ENCODE measurements at regions of chr6 and their contacts with region 1.

Region 1: GRCh38 chr6:144013486-144013909 is 5.4 kb upstream of the PLAGL1 start:
- DNase-seq: peak; percentile 62 to 63
- H3K4me3 ChIP-seq: no peak overlapping the region
- H3K27ac ChIP-seq: no peak overlapping the region
- H3K4me1 ChIP-seq: no peaks in the 10 kb centered on the region
- H3K27me3 ChIP-seq: peaks cover 4% of the 10 kb centered on the region; the same call in 1 of the 2 replicates
- CTCF ChIP-seq: peak; percentile 88

Region 2: DNA sequence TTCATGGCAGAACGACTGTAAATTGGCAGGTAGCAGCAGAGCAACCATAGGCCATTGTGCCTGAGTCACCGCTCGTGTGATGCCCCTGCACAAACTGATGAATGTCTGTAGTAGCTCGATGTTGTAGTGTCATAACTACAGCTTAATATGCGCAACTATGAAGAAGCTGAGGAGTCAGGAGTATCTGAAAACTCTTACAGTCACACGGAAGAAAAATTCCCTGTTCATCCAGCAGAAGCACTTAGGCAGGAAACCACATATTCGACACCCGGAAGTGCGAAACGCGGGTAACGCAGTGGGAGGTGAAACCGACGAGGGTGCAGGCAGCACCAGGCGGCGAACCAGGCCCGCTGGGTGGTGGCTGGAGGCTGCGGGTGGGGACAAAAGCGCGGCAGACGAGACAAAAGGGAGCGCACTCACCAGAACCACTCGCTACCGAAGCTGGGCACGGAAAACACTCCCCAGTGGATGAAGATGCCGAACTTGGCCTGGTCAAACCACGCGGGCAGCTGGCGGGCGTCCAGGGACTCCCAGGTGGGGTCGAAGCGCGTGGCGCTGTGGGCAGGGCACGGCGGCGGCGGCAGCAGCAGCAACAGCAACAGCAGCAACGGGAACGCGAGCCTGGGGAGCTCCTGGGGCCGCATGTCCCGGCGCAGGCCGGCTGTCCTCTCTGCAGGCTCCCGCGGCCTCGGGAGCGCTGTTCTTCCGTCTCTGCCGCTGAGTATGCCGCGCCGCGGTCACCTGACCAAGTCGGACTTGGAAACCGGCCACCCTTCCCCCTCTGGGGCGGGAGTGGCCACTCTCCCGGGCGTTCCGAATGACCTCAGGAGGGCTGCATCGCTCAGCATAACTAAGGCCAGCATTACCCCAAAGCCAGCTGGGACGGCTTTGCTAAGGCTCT is 502.3 kb before region 1 on chr6 and contains the start of gene FUCA2:
- CTCF ChIA-PET with region 1: no interaction called
- POLR2A ChIA-PET with region 1: no interaction called
- intact Hi-C with region 1: loop called (anchors 2 kb)
- DNase-seq: peak; percentile 65 to 84
- H3K4me3 ChIP-seq: peak within 1 kb of the TSS; percentile 81
- H3K27ac ChIP-seq: peak within 1 kb of the TSS; percentile 71
- H3K4me1 ChIP-seq: peaks cover 21% of the 10 kb centered on the region
- H3K27me3 ChIP-seq: no peaks in the 10 kb centered on the region
- CTCF ChIP-seq: no peak
- total RNA-seq, gene FUCA2: 65.0 and 74.8 TPM in 2 replicates

Region 3: GRCh38 chr6:143575440-143575839 is 438.1 kb before region 1 on chr6:
- CTCF ChIA-PET with region 1: interaction called, 10 read pairs
- POLR2A ChIA-PET with region 1: no interaction called
- intact Hi-C with region 1: loop called (anchors 1 kb)
- DNase-seq: peak; percentile 48 to 56
- H3K4me3 ChIP-seq: no peak overlapping the region
- H3K27ac ChIP-seq: no peak overlapping the region
- H3K4me1 ChIP-seq: no peaks in the 10 kb centered on the region
- H3K27me3 ChIP-seq: no peaks in the 10 kb centered on the region
- CTCF ChIP-seq: peak; percentile 93

Region 4: GRCh38 chr6:143745166-143746133 is 268.0 kb before region 1 on chr6:
- CTCF ChIA-PET with region 1: no interaction called
- POLR2A ChIA-PET with region 1: no interaction called
- intact Hi-C with region 1: loop called (anchors 10 kb)
- DNase-seq: peak; percentile 78 to 80
- H3K4me3 ChIP-seq: peak overlapping the region; percentile 17; the same call in 1 of the 2 replicates
- H3K27ac ChIP-seq: peak overlapping the region; percentile 54
- H3K4me1 ChIP-seq: peaks cover 32% of the 10 kb centered on the region
- H3K27me3 ChIP-seq: no peaks in the 10 kb centered on the region
- CTCF ChIP-seq: no peak

Region 5: GRCh38 chr6:144036064-144036834 is 22.8 kb after region 1 on chr6:
- CTCF ChIA-PET with region 1: no interaction called
- POLR2A ChIA-PET with region 1: no interaction called
- intact Hi-C with region 1: no loop called
- DNase-seq: no peak
- H3K4me3 ChIP-seq: no peak overlapping the region
- H3K27ac ChIP-seq: no peak overlapping the region
- H3K4me1 ChIP-seq: no peaks in the 10 kb centered on the region
- H3K27me3 ChIP-seq: no peaks in the 10 kb centered on the region
- CTCF ChIP-seq: no peak

Measured in PC-9 (cell line).